ENCODE measurements at regions of chr12 and their contacts with region 1.

Region 1: DNA sequence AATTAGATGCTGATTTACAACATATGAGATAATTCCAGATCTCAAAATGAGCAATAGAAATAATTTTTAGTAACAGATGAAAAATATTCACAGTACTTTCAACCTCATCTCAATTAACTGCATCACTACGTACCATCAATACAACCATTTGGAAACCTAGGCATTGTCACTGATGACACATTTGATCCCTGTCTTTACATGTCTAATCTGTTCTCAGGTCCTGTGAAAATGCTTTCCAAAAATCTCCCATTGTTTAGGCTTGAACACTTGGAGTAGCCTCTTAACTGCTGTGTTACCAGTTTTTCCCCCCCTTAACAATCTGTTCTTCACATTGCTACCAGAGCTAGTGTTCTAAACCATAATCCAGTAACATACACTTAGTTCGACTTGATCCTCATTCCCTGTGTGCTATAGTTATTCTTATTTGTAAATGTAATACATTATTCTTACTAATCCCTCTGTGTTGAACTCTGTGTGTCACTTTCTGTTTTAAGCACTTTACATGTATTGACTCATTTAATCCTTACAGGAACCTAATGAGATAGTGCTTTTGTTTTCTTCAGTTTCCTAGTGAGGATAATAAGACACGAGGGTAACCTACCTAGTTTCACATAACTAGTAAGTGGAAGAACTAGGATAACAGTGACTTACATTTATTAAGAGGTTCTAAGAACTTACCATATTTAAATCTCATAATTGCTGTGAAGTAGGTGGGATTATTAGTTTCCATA is 41.7 kb downstream of the LARP4 start:
- DNase-seq: no peak
- ATAC-seq: no peak
- H3K4me3 ChIP-seq: no peak overlapping the region
- H3K4me3 Mint-ChIP-seq: no peak overlapping the region
- H3K27ac ChIP-seq: no peak overlapping the region
- H3K27ac Mint-ChIP-seq: peak overlapping the region in 1 of 2 donors; percentile 46
- H3K4me1 ChIP-seq: no peaks in the 10 kb centered on the region
- H3K4me1 Mint-ChIP-seq: peaks cover 0 to 6% (median 0%) of the 10 kb centered on the region in 3 donors
- H3K27me3 ChIP-seq: no peaks in the 10 kb centered on the region
- H3K27me3 Mint-ChIP-seq: no peaks in the 10 kb centered on the region

Region 2: GRCh38 chr12:50425589-50426258 is 16.6 kb before region 1 on chr12:
- CTCF ChIA-PET with region 1: no interaction called
- POLR2A ChIA-PET with region 1: no interaction called
- DNase-seq: no peak
- ATAC-seq: no peak
- H3K4me3 ChIP-seq: no peak overlapping the region
- H3K4me3 Mint-ChIP-seq: no peak overlapping the region
- H3K27ac ChIP-seq: no peak overlapping the region
- H3K27ac Mint-ChIP-seq: peak overlapping the region in 1 of 2 donors; percentile 50
- H3K4me1 ChIP-seq: no peaks in the 10 kb centered on the region
- H3K4me1 Mint-ChIP-seq: peaks cover 12% of the 10 kb centered on the region in 3 donors
- H3K27me3 ChIP-seq: no peaks in the 10 kb centered on the region
- H3K27me3 Mint-ChIP-seq: no peaks in the 10 kb centered on the region

Region 3: GRCh38 chr12:50458606-50459005 is 16.3 kb after region 1 on chr12:
- CTCF ChIA-PET with region 1: no interaction called
- POLR2A ChIA-PET with region 1: no interaction called
- DNase-seq: no peak
- ATAC-seq: no peak
- H3K4me3 ChIP-seq: no peak overlapping the region
- H3K4me3 Mint-ChIP-seq: no peak overlapping the region
- H3K27ac ChIP-seq: no peak overlapping the region
- H3K27ac Mint-ChIP-seq: no peak overlapping the region
- H3K4me1 ChIP-seq: no peaks in the 10 kb centered on the region
- H3K4me1 Mint-ChIP-seq: no peaks in the 10 kb centered on the region
- H3K27me3 ChIP-seq: no peaks in the 10 kb centered on the region
- H3K27me3 Mint-ChIP-seq: no peaks in the 10 kb centered on the region

Region 4: GRCh38 chr12:50482566-50482965 is 40.2 kb after region 1 on chr12:
- CTCF ChIA-PET with region 1: no interaction called
- POLR2A ChIA-PET with region 1: no interaction called
- DNase-seq: no peak
- ATAC-seq: no peak
- H3K4me3 ChIP-seq: no peak overlapping the region
- H3K4me3 Mint-ChIP-seq: no peak overlapping the region
- H3K27ac ChIP-seq: no peak overlapping the region
- H3K27ac Mint-ChIP-seq: no peak overlapping the region
- H3K4me1 ChIP-seq: no peaks in the 10 kb centered on the region
- H3K4me1 Mint-ChIP-seq: no peaks in the 10 kb centered on the region
- H3K27me3 ChIP-seq: no peaks in the 10 kb centered on the region
- H3K27me3 Mint-ChIP-seq: no peaks in the 10 kb centered on the region

Region 5: GRCh38 chr12:50661300-50662115 is 219.2 kb after region 1 on chr12:
- CTCF ChIA-PET with region 1: no interaction called
- POLR2A ChIA-PET with region 1: interaction called in 1 of 2 experiments, 10 read pairs
- DNase-seq: no peak
- ATAC-seq: no peak
- H3K4me3 ChIP-seq: no peak overlapping the region
- H3K4me3 Mint-ChIP-seq: no peak overlapping the region
- H3K27ac ChIP-seq: no peak overlapping the region
- H3K27ac Mint-ChIP-seq: no peak overlapping the region
- H3K4me1 ChIP-seq: no peaks in the 10 kb centered on the region
- H3K4me1 Mint-ChIP-seq: peaks cover 0 to 3% (median 0%) of the 10 kb centered on the region in 3 donors
- H3K27me3 ChIP-seq: no peaks in the 10 kb centered on the region
- H3K27me3 Mint-ChIP-seq: no peaks in the 10 kb centered on the region